ENCODE measurements at regions of chr3 and their contacts with region 1.

Region 1: GRCh38 chr3:108914774-108915641 is 38.7 kb downstream of the GUCA1C start:
- DNase-seq: peak in 2 of 3 donors; percentile 38 to 64
- ATAC-seq: peak; percentile 94
- H3K4me3 ChIP-seq: no peak overlapping the region
- H3K4me1 ChIP-seq: no peaks in the 10 kb centered on the region
- CTCF ChIP-seq: peak; percentile 68

Region 2: GRCh38 chr3:108662130-108662738 is 252.8 kb before region 1 on chr3:
- intact Hi-C with region 1: loop called (anchors 5 to 10 kb)
- DNase-seq: peak in 1 of 3 donors; percentile 37
- ATAC-seq: peak; percentile 82
- H3K4me3 ChIP-seq: no peak overlapping the region
- H3K4me1 ChIP-seq: no peaks in the 10 kb centered on the region
- CTCF ChIP-seq: peak; percentile 37

Measured in mucosa of descending colon (tissue), 3 donors.